ENCODE measurements at regions of chr5 and their contacts with region 1.

Region 1: DNA sequence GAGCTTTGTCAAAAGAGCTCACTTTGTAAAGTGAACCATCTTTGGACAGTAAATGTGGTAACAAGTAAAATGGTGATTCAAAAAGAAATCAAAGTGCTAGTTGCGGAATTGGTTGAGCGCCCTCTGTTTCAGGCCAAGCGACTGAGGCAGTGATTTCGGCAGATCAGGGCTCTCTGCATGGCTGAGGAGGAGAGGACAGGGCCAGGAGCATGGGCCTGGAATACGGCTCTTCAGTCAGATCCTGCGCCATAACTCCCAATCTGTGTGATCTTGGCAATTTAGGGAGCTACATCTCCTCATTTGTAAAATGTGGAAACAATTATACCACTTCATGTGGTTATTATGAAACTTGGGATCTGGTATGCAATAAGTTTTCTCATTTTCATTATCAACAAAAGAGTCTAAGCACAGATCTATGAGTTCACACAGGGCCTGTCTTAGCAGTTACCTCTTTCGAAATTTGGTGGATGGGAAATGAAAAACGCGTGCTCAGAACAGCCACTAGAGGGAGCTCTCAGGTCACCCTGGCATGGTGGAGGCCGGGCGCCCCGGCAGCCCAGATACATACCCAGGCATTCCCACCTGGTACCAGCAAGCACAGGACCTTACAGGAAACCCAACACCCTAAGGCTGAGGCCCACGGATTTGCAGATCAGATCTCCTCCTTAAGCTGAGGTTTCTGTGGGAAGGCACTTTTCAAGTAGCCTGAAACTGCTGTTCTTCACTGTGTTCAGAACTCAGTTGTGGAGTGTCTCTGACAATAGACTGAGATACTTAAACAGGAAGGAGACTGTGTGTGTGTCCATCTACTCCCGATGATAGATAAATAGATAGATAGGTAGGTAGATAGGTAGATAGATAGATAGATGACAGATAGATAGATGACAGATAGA is 303.7 kb downstream of the RAB3C start:
- DNase-seq: peak; percentile 60
- ATAC-seq: peak; percentile 67
- H3K4me3 ChIP-seq: no peak overlapping the region
- H3K27ac ChIP-seq: no peak overlapping the region
- H3K4me1 ChIP-seq: peaks cover 8% of the 10 kb centered on the region
- H3K27me3 ChIP-seq: no peaks in the 10 kb centered on the region
- CTCF ChIP-seq: peak; percentile 82

Region 2: DNA sequence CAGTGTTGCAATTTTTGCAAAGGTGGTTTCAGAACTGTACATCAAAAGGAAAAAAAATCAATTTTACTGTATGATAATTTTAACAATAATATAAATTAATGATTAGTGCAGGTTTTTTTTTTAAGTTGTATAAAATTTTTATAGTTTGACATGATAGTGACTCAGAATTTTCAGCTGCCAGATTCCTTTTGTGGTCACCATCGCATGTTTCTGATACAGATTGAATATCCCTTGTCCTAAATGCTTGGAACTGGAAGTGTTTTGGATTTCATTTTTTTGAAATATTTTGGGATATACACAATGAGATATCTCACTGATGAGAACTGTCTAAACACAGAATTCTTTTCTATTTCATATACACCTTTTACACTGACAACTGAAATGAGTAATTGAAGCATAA is 57.7 kb after region 1 on chr5:
- CTCF ChIA-PET with region 1: no interaction called
- POLR2A ChIA-PET with region 1: interaction called, 3 read pairs
- intact Hi-C with region 1: loop called (anchors 1 kb)
- DNase-seq: peak; percentile 30
- ATAC-seq: peak; percentile 45
- H3K4me3 ChIP-seq: no peak overlapping the region
- H3K27ac ChIP-seq: peak overlapping the region; percentile 23; the same call in 1 of the 2 replicates
- H3K4me1 ChIP-seq: peaks cover 11% of the 10 kb centered on the region
- H3K27me3 ChIP-seq: no peaks in the 10 kb centered on the region
- CTCF ChIP-seq: no peak

Region 3: GRCh38 chr5:59007460-59008063 is 121.0 kb after region 1 on chr5:
- CTCF ChIA-PET with region 1: interaction called, 3 read pairs
- POLR2A ChIA-PET with region 1: no interaction called
- intact Hi-C with region 1: loop called (anchors 1 kb)
- DNase-seq: peak; percentile 55
- ATAC-seq: no peak; the same call in 1 of the 2 replicates
- H3K4me3 ChIP-seq: no peak overlapping the region
- H3K27ac ChIP-seq: no peak overlapping the region
- H3K4me1 ChIP-seq: no peaks in the 10 kb centered on the region
- H3K27me3 ChIP-seq: no peaks in the 10 kb centered on the region
- CTCF ChIP-seq: peak; percentile 63

Region 4: GRCh38 chr5:59174248-59174844 is 287.8 kb after region 1 on chr5:
- CTCF ChIA-PET with region 1: no interaction called
- POLR2A ChIA-PET with region 1: no interaction called
- intact Hi-C with region 1: loop called (anchors 1 kb)
- DNase-seq: peak; percentile 19
- ATAC-seq: peak; percentile 49; the same call in 1 of the 2 replicates
- H3K4me3 ChIP-seq: no peak overlapping the region
- H3K27ac ChIP-seq: no peak overlapping the region
- H3K4me1 ChIP-seq: no peaks in the 10 kb centered on the region
- H3K27me3 ChIP-seq: no peaks in the 10 kb centered on the region
- CTCF ChIP-seq: peak; percentile 56

Region 5: DNA sequence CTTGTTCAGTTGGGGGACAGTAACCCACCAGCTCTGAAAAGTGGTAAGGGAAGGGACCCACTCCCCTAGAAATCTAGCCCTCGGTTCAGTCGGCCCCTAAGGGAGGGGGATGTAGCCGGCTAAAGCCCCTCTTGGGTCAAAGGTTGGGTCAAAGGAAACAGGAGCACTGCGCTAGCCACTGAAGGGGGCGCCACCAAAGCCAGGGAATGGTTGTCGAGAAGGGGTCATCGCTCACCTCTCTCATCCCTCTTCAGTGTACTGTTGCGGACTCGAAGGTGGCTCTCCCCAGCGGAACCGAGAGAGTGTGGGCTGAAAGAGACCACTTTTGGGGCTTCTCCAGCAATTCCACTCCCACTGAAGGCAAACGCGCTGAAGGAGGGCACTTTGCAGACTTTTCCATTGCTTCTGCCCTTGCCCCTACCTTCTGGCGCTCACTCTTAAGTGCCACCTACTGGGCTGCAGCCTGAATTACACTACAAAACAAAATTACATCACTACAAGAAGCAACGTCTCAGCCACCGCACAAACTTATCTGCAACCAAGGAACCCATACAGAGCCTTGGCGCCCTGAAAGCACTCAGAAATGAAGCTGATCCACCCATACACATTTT is 610.1 kb after region 1 on chr5:
- CTCF ChIA-PET with region 1: no interaction called
- POLR2A ChIA-PET with region 1: no interaction called
- intact Hi-C with region 1: loop called (anchors 5 kb)
- DNase-seq: peak; percentile 39
- ATAC-seq: peak; percentile 27; the same call in 1 of the 2 replicates
- H3K4me3 ChIP-seq: no peak overlapping the region
- H3K27ac ChIP-seq: no peak overlapping the region
- H3K4me1 ChIP-seq: no peaks in the 10 kb centered on the region
- H3K27me3 ChIP-seq: no peaks in the 10 kb centered on the region
- CTCF ChIP-seq: peak; percentile 64

Region 6: DNA sequence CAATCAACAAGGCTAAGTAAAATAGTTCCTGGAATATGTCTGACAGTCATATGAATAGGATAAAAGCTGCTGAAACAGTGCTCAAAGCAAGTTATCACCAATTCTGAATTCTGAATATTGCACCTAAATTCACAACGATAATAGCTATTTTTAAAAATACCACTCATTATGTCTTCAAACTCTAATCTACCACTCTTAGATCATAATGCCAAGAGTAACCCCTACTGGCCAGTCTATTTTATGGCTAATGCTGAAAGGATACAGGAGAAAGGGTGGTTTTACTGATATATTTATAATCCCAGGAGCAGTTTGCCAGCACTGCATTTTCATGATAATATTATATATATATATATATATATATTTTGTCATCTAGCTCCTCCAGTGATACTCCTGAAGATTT is 774.2 kb after region 1 on chr5:
- CTCF ChIA-PET with region 1: no interaction called
- POLR2A ChIA-PET with region 1: no interaction called
- intact Hi-C with region 1: loop called (anchors 5 kb)
- DNase-seq: peak; percentile 53
- ATAC-seq: peak; percentile 45; the same call in 1 of the 2 replicates
- H3K4me3 ChIP-seq: no peak overlapping the region
- H3K27ac ChIP-seq: no peak overlapping the region
- H3K4me1 ChIP-seq: peaks cover 23% of the 10 kb centered on the region
- H3K27me3 ChIP-seq: no peaks in the 10 kb centered on the region
- CTCF ChIP-seq: peak; percentile 55

Region 7: DNA sequence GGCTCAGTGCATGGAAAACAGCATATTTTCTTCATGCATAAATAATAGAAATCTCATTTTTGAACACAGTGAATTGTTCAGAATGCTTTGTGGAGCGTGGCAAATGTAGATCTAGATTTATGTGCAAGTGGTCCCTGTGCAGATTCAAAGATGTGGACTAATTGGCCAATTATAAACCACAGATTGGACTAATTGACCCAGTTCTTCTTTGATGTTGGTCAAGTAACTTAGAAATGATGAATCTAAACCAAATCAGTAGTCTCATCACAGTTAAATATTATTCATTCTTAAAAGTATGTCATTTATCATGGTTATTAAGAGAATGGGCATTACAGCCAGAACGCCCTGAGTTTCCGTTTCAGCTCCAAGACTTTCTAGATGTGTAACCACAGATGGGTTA is 1018.6 kb after region 1 on chr5:
- CTCF ChIA-PET with region 1: no interaction called
- POLR2A ChIA-PET with region 1: interaction called, 15 read pairs
- intact Hi-C with region 1: no loop called
- DNase-seq: no peak
- ATAC-seq: no peak
- H3K4me3 ChIP-seq: no peak overlapping the region
- H3K27ac ChIP-seq: no peak overlapping the region
- H3K4me1 ChIP-seq: no peaks in the 10 kb centered on the region
- H3K27me3 ChIP-seq: peaks cover 51% of the 10 kb centered on the region
- CTCF ChIP-seq: no peak

Measured in PC-3 (cell line).